ENCODE measurements at regions of chr19 and their contacts with region 1.

Region 1: GRCh38 chr19:1087813-1088415 is 7.3 kb downstream of the POLR2E start:
- DNase-seq: peak in 7 of 9 donors; percentile 65 to 71 (median 67)
- ATAC-seq: peak; percentile 72
- H3K4me3 ChIP-seq: no peak overlapping the region
- H3K4me3 Mint-ChIP-seq: peak overlapping the region; percentile 23 to 83 (median 72)
- H3K27ac ChIP-seq: peak overlapping the region; percentile 84
- H3K27ac Mint-ChIP-seq: peak overlapping the region; percentile 74 to 98 (median 93)
- H3K4me1 ChIP-seq: peaks cover 28 to 32% of the 10 kb centered on the region in 2 donors
- H3K4me1 Mint-ChIP-seq: peaks cover 26 to 59% (median 36%) of the 10 kb centered on the region in 7 donors
- H3K27me3 ChIP-seq: no peaks in the 10 kb centered on the region
- H3K27me3 Mint-ChIP-seq: no peaks in the 10 kb centered on the region

Region 2: DNA sequence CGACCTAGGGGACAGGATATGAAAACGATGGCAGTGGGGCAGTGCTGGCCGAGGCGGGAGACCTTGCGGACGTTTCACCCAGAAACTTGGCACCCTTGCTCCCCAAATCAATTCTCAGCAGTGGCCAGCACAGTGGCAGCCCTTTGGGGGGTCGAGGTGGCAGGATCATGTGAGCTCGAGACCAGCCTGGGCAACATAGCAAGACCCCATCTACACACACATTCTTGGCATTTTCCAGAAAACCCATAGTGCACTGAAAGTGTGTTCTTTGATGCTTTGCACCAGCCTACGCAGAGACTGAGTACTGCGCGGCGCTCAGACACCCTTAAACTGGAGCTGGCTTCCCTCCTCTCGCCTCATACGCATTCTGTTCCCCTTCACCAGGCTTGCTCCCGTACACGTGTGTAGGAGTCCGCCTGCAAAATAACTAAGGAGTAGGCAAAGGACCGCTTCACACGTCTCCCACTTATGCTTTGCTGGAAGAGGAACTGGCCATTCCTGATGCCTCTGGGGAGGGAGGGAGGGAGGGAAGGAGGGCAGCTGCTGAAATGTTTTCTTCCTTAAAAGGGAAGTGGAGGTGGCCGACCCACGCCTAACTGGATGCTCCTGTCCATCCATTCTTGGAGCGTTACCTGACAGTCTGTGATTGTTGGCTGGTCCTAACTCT is 719.8 kb before region 1 on chr19:
- CTCF ChIA-PET with region 1: no interaction called
- POLR2A ChIA-PET with region 1: no interaction called
- intact Hi-C with region 1: no loop called
- DNase-seq: no peak
- ATAC-seq: no peak
- H3K4me3 ChIP-seq: no peak overlapping the region
- H3K4me3 Mint-ChIP-seq: no peak overlapping the region
- H3K27ac ChIP-seq: no peak overlapping the region
- H3K27ac Mint-ChIP-seq: no peak overlapping the region
- H3K4me1 ChIP-seq: no peaks in the 10 kb centered on the region
- H3K4me1 Mint-ChIP-seq: no peaks in the 10 kb centered on the region
- H3K27me3 ChIP-seq: no peaks in the 10 kb centered on the region
- H3K27me3 Mint-ChIP-seq: peaks cover 5 to 53% (median 43%) of the 10 kb centered on the region in 5 donors

Region 3: GRCh38 chr19:506404-507285 is 581.3 kb before region 1 on chr19:
- CTCF ChIA-PET with region 1: no interaction called
- POLR2A ChIA-PET with region 1: no interaction called
- intact Hi-C with region 1: no loop called
- DNase-seq: peak; percentile 88 to 99 (median 98)
- ATAC-seq: peak; percentile 67
- H3K4me3 ChIP-seq: peak overlapping the region; percentile 100
- H3K4me3 Mint-ChIP-seq: peak overlapping the region; percentile 89 to 100 (median 97)
- H3K27ac ChIP-seq: peak overlapping the region; percentile 87
- H3K27ac Mint-ChIP-seq: peak overlapping the region; percentile 96 to 100 (median 99)
- H3K4me1 ChIP-seq: peaks cover 29 to 40% of the 10 kb centered on the region in 2 donors
- H3K4me1 Mint-ChIP-seq: peaks cover 21 to 49% (median 46%) of the 10 kb centered on the region in 7 donors
- H3K27me3 ChIP-seq: no peaks in the 10 kb centered on the region
- H3K27me3 Mint-ChIP-seq: no peaks in the 10 kb centered on the region

Region 4: GRCh38 chr19:1057176-1057855 is 30.6 kb before region 1 on chr19:
- CTCF ChIA-PET with region 1: interaction called, 6 read pairs
- POLR2A ChIA-PET with region 1: interaction called, 2,022 read pairs
- intact Hi-C with region 1: loop called in 1 of 2 experiments (anchors 1 kb)
- DNase-seq: peak in 4 of 9 donors; percentile 35 to 54 (median 46)
- ATAC-seq: peak; percentile 67
- H3K4me3 ChIP-seq: no peak overlapping the region
- H3K4me3 Mint-ChIP-seq: peak overlapping the region in 6 of 10 donors; percentile 13 to 64 (median 48)
- H3K27ac ChIP-seq: peak overlapping the region; percentile 10
- H3K27ac Mint-ChIP-seq: peak overlapping the region; percentile 28 to 93 (median 79)
- H3K4me1 ChIP-seq: peaks cover 14 to 15% of the 10 kb centered on the region in 2 donors
- H3K4me1 Mint-ChIP-seq: peaks cover 7 to 33% (median 23%) of the 10 kb centered on the region in 7 donors
- H3K27me3 ChIP-seq: no peaks in the 10 kb centered on the region
- H3K27me3 Mint-ChIP-seq: no peaks in the 10 kb centered on the region